Right ventricle myocardium inferior (tissue), 1 donor: ENCODE measurements at regions of chr1 and their contacts with region 1.

Region 1: GRCh38 chr1:226201029-226201593 is 14.6 kb upstream of the ACBD3 start:
- DNase-seq: no peak
- ATAC-seq: no peak

Region 2: DNA sequence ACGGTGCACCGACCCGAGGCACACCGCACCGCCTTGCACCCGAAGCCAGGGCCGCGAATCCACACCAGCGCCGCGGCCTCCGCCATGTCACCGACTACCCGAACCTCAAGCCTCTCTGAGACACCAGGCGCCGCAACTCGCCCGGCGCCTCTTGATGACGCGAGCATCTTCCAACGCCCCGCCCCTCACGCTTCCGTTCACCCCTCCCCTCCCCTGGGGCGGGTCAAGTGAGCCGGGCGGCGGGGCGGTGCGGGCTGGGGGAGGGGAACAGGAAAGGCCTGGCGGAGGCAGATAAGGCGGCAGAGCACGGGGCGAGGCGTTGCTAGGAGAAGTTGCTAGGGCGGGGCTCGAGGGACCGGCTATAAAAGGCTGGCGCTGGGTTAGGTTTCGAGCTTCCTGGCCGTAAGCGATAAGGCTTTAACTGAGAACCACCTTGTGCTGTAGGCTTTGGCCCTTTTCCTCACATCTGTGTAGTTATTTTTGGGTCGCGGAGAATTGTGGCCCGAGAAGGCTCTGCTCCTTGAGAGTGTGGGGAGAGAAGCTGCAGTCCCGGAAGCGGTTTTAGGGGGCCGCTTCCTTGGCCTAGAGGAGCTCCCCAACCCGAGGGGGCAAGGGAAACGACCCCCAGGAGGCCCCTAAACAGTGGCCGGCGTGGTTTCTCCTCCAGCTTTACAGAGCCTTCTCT is 201.7 kb before region 1 on chr1 and contains the start of gene SDE2:
- intact Hi-C with region 1: no loop called
- DNase-seq: peak; percentile 100
- ATAC-seq: peak; percentile 99
- total RNA-seq, gene SDE2: 11.7 TPM

Region 3: DNA sequence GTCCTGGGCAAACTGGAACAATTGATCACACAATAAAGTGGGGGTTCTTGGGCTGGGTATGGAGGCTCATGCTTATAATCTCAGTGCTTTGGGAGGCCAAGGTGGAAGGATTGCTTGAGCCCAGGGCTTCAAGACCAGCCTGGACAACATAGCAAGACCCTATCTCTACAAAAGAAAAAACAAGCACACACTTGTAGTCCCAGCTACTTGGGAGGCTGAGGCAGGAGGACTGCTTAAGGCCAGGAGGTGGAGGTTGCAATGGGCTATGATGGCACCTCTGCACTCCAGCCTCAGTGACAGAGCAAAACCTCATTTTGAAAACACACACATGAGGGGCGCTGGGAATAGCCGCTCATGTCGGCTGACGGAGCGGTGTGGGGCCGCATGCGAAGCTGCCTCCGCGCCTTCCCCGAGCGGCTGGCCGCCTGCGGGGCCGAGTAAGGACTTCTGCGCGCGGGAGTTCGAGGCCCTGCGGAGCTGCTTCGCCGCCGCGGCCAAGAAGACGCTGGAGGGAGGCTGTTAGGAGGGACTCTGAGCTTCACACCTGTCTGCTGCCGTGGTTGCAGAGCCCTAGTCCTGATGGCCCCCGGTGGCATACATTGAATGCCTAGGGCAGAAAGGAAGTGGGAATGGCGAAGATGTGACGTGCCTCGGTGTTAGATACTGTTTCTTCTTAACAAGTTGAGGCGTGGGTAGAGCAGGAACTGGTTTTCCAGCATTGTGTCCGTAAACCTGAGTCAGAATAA is 74.1 kb before region 1 on chr1:
- intact Hi-C with region 1: loop called (anchors 2 kb)
- DNase-seq: no peak
- ATAC-seq: no peak

Region 4: DNA sequence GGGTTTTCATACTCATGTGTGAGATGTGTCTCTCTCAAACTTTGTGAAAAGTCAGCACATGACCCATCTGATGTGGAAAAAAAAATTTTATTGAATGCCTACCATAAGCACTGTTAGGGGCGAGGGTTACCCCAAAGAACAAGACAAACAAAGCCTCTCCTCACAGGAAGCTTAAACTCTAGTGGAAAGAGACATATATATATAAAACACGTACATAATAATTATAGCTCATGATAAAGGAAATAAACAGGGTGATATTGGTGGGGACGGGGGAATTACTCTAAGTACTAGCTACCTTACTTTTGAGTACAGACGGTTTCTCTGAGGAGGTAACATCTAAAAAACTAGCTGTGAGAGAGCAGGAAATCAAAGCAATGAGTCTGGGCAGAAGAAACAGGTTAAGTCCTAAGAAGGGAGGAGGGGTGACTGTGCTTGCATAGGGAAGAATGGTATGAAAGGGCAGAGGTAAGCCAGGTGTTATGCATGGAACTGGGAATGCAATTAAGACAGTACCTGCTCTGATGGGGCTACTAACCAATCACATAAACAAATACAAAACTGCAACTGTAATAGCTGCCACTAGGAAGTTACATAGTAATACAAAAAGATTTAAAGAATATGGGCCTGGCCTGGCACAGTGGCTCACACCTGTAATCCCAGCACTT is 103.3 kb after region 1 on chr1:
- intact Hi-C with region 1: no loop called
- DNase-seq: no peak
- ATAC-seq: no peak